Panc1 (cell line): ENCODE measurements at regions of chr1 and their contacts with region 1.

Region 1: DNA sequence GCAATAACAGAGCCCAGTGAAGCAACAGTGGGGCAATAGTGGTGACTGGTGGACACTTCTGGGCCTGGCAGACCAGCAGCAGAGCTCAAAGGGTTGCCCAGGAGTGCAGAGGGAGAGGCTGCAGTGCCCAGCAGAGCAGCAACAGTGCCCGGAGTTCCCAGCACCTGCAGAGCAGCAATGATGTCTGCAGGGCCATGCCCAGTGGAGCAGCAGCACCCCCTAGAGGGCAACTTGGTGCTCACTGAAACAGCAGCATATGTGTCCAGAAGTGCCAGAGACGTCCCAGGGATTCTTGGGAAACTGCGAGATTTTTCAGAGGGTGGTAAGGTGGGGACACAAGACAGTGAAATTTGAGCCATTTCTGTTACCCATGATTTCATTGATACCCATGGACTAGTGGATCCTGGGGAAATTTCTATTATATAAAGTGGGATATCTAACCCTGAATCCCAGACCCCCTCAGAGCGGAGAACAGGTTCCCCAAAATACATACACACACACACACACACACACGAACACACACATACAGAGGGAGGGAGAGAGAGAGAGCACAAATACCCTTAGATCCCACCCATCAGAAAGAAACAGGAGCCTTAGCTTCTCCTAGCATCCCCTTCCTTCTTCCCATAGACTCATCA is 156.9 kb upstream of the GJB5 start:
- DNase-seq: peak; percentile 42
- ATAC-seq: peak; percentile 95
- H3K4me3 ChIP-seq: no peak overlapping the region
- H3K27ac ChIP-seq: no peak overlapping the region
- H3K4me1 ChIP-seq: no peaks in the 10 kb centered on the region
- H3K27me3 ChIP-seq: peaks cover 3% of the 10 kb centered on the region
- CTCF ChIP-seq: peak; percentile 95

Region 2: DNA sequence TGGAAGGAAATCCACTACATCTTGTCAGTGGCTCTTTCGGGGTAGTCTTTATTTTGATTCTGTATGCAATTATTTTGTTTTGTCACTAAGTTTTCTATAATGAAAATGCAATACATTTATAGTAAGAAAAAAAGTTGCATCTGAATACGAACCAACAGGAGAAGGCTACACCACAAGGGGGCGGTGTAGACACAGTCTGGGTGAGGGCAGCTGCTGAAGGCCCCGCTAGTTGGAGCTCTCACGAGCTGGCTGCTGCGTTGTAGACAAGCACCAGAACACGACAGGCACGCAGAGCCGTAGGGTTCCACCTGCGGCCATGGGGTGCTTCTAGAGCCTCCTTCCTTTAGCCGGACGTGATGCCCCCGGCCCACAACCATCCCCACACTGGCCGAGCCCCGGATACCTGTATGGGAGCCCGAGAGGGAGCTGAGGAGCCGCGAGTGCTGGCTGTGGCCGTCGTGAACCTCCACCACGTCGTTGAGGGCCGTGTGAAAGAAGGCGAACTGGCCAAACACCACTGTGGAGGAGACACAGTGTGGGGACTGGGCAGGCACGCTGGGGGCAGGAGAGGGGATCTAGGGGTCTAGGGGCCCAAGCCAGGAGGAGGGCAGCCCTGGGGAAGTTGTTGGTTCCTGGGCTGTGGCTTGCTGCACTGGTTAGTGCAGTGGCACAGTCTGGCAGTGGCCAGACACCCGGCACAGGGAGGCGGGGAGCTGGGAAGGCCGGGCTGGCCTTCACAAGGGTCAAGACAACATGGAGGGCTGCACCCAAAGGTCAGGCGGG is 964.8 kb before region 1 on chr1:
- CTCF ChIA-PET with region 1: interaction called, 3 read pairs
- POLR2A ChIA-PET with region 1: no interaction called
- in situ Hi-C with region 1: no loop called
- intact Hi-C with region 1: loop called (anchors 1 kb)
- DNase-seq: peak; percentile 77
- ATAC-seq: peak; percentile 96
- H3K4me3 ChIP-seq: peak overlapping the region in 1 of 2 experiments; percentile 23; a peak in 1 of 4 replicates
- H3K27ac ChIP-seq: no peak overlapping the region
- H3K4me1 ChIP-seq: no peaks in the 10 kb centered on the region
- H3K27me3 ChIP-seq: peaks cover 12% of the 10 kb centered on the region
- CTCF ChIP-seq: peak; percentile 99

Region 3: GRCh38 chr1:33762109-33762830 is 835.7 kb before region 1 on chr1:
- CTCF ChIA-PET with region 1: interaction called, 12 read pairs
- POLR2A ChIA-PET with region 1: no interaction called
- in situ Hi-C with region 1: no loop called
- intact Hi-C with region 1: no loop called
- DNase-seq: no peak
- ATAC-seq: no peak
- H3K4me3 ChIP-seq: no peak overlapping the region
- H3K27ac ChIP-seq: no peak overlapping the region
- H3K4me1 ChIP-seq: no peaks in the 10 kb centered on the region
- H3K27me3 ChIP-seq: no peaks in the 10 kb centered on the region
- CTCF ChIP-seq: no peak

Region 4: DNA sequence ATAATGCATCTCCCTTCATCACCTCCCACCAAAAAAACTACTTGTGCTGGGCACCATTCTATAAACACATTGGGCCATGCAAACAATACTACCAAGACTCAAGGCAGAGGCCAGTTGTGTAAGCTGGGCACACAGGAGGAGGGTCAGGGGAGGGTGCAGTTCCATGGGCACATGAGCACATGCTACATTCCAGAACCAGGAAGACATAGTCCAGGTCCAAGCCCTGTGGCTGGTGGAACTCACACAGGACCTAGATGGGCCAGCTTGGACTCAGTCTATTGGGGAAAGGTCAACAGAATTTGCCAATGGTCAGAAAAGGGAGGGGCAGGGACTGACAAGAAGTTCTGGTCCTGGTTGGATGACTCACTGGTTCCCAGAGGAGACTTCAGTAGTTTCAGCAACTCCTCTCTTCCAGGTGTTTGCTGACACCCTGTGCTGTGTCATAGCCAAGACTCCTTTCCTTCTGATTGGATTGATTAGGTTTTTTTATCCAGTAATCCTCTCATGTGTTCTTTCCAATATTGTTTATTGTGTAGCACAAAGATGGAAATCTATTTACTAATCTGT is 171.6 kb before region 1 on chr1:
- CTCF ChIA-PET with region 1: interaction called, 14 read pairs
- POLR2A ChIA-PET with region 1: no interaction called
- in situ Hi-C with region 1: no loop called
- intact Hi-C with region 1: no loop called
- DNase-seq: no peak
- ATAC-seq: no peak
- H3K4me3 ChIP-seq: no peak overlapping the region
- H3K27ac ChIP-seq: no peak overlapping the region
- H3K4me1 ChIP-seq: no peaks in the 10 kb centered on the region
- H3K27me3 ChIP-seq: no peaks in the 10 kb centered on the region; the same call in 1 of the 2 replicates
- CTCF ChIP-seq: no peak

Region 5: GRCh38 chr1:34742667-34743270 is 144.8 kb after region 1 on chr1:
- CTCF ChIA-PET with region 1: no interaction called
- POLR2A ChIA-PET with region 1: no interaction called
- in situ Hi-C with region 1: no loop called
- intact Hi-C with region 1: loop called (anchors 5 kb)
- DNase-seq: peak; percentile 47
- ATAC-seq: peak; percentile 97
- H3K4me3 ChIP-seq: no peak overlapping the region
- H3K27ac ChIP-seq: no peak overlapping the region
- H3K4me1 ChIP-seq: no peaks in the 10 kb centered on the region
- H3K27me3 ChIP-seq: no peaks in the 10 kb centered on the region
- CTCF ChIP-seq: peak; percentile 97